Esophagus squamous epithelium (tissue), 5 donors: ENCODE measurements at regions of chr1 and their contacts with region 1.

Region 1: DNA sequence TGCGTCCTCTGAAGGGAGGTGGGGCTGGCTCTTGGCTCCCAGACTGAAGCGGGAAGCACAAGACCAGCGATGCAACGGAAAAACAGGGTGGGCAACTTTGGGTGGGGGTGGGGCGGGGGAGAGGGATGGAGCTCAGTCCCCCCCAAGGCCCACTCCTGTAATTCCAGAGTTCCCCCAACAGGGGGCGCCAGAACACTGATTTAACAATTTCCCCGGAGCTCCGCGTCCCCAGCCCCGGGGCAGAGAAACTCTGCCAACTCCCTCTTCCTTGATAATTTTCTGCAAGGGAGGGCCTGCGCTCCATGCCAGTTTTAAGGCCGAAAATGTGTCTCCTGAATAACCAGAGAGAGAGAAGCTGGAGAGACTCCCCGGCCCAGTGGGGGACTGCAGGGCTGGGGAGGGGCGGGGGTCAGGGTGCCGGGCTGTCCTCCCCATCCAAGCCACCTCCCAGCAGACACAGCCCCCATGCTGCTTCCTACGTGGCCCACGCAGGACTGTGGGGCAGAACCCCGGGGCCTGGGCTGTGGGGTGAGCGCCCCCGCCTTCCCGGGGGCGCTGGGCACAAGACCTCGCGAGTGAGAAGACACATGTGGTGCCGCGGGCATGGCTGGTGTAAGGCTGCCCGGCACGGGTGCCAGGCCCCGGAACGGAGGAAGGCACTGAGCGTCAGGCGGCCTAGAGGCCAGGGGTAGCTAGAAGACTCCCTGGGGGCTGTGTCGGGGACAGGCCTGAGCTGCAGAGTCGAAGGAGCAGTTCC is 51.4 kb downstream of the KIF21B start:
- DNase-seq: no peak
- H3K4me3 ChIP-seq: peak overlapping the region in 1 of 4 donors; percentile 15
- H3K27ac ChIP-seq: no peak overlapping the region
- H3K4me1 ChIP-seq: peaks cover 4 to 22% (median 4%) of the 10 kb centered on the region in 3 donors
- H3K27me3 ChIP-seq: no peaks in the 10 kb centered on the region
- CTCF ChIP-seq: peak; percentile 57 to 94 (median 72)
- POLR2A ChIP-seq: no peak

Region 2: GRCh38 chr1:200693327-200693726 is 278.8 kb before region 1 on chr1:
- intact Hi-C with region 1: no loop called
- DNase-seq: no peak
- H3K4me3 ChIP-seq: no peak overlapping the region
- H3K27ac ChIP-seq: no peak overlapping the region
- H3K4me1 ChIP-seq: no peaks in the 10 kb centered on the region
- H3K27me3 ChIP-seq: no peaks in the 10 kb centered on the region
- CTCF ChIP-seq: no peak
- POLR2A ChIP-seq: no peak

Region 3: DNA sequence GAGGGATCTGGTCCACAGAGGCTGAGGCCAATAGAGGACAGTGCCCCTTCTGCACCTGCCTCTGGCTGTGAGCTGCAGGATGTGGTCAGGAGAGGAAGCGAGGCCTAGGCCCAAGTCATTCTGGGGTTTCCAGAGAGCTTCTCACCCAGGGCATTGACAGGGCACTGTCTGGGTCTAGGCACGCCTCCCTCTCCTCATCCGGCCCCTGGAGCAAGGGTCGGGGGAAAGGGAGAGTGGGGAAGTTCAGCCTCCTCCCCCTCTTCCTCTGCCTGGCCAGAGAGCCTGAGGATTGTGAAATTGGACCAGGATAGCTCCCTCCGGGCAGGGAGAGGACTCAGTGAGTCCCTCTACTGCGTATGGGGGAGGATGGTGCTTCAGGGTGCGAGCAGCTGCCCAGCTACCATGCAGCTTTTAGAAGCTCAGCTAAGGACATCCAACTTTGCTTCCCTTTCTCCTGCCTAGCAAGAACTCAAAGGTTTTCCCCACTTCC is 83.7 kb before region 1 on chr1:
- intact Hi-C with region 1: loop called (anchors 10 kb)
- DNase-seq: no peak
- H3K4me3 ChIP-seq: peak overlapping the region in 2 of 4 donors; percentile 27 to 30
- H3K27ac ChIP-seq: peak overlapping the region in 1 of 4 donors; percentile 6
- H3K4me1 ChIP-seq: peaks cover 12 to 46% (median 19%) of the 10 kb centered on the region in 3 donors
- H3K27me3 ChIP-seq: peaks cover 0 to 50% (median 0%) of the 10 kb centered on the region in 4 donors
- CTCF ChIP-seq: no peak
- POLR2A ChIP-seq: peak in 1 of 4 donors; percentile 22

Region 4: DNA sequence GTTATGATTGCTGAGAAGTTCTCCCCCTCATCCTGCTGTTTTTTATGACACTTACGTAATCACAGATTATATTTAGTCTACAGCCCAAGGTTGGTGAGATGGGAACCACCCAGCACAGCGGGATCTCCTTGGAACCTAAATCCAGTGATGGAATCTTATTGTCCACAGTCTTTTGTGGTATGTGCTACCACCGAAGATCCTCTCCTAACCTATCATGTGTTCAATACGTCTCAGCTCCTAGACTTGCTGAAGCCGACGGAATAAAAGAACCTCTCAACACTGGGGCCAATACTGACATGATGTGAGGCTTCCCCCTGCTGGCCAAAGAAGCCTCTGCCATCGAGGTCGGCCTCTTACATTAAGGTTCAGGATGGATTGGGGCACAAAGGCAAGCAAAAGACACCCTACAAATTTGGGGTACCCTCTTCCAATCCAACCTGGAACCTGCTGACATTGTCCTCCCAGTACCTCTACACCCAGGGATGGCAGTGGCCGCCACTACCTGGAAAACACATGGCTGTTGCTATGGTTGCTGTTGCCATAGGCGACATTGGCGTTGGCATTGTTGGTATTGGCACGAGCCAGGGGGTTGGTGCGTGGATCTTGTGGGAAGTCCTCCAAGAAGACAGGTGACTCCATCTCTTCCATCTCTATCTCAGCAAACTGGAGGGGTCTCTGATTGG is 70.8 kb after region 1 on chr1:
- intact Hi-C with region 1: loop called (anchors 2 kb)
- DNase-seq: peak; percentile 9
- H3K4me3 ChIP-seq: no peak overlapping the region
- H3K27ac ChIP-seq: no peak overlapping the region
- H3K4me1 ChIP-seq: peaks cover 0 to 4% (median 0%) of the 10 kb centered on the region in 3 donors
- H3K27me3 ChIP-seq: peaks cover 0 to 8% (median 0%) of the 10 kb centered on the region in 4 donors
- CTCF ChIP-seq: peak; percentile 73 to 88 (median 86)
- POLR2A ChIP-seq: no peak

Region 5: DNA sequence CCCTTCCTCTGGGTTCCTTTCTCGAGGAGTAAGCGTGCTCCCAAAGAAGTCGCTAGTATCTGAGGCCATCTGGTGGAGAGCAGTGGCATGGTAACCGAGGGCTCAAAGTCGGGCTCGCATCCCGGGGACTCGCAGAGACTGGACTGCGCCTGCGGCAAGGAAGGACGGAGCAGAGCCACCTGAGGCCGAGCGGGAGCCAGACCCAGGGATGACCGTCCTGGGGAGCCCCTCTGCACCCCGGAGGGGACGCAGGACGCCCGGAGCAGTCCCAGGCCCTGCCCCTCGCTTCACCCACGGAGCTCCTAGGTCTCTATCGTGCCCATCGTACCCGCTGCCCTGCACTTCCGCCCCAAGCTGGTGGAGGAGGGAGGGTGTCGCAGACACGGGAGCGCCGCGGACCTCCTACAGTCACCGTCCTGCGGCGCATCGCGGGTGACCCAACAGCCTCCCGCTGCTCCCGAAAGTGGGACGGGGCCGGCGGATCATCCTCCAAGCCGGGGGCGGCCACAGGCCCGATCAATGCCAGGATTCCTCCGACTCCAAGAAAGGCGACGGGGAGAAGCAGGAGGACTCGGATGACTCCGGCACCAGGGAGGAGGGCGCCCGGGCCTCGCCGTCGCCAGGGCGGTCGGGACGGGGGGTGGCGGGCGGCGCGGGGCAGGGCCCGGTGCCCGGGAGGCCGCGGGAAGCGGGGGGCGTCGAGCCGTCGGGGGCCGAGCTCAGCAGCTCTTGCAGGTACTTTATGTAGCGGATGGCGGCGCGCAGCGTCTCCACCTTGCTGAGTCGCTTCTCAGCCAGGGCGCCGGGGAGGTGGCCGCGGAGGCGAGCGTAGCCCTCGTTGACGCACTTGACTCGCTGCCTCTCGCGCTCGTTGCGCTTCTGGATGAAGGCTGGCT is 142.4 kb after region 1 on chr1:
- intact Hi-C with region 1: loop called (anchors 5 kb)
- DNase-seq: peak; percentile 19
- H3K4me3 ChIP-seq: peak overlapping the region; percentile 35 to 82 (median 56)
- H3K27ac ChIP-seq: peak overlapping the region in 3 of 4 donors; percentile 31 to 79 (median 34)
- H3K4me1 ChIP-seq: peaks cover 6 to 17% (median 10%) of the 10 kb centered on the region in 3 donors
- H3K27me3 ChIP-seq: peaks cover 0 to 60% (median 2%) of the 10 kb centered on the region in 4 donors
- CTCF ChIP-seq: peak; percentile 58 to 85 (median 78)
- POLR2A ChIP-seq: peak in 1 of 4 donors; percentile 28